Endothelial cell of umbilical vein (primary cell): ENCODE measurements at regions of chr6 and their contacts with region 1.

Region 1: DNA sequence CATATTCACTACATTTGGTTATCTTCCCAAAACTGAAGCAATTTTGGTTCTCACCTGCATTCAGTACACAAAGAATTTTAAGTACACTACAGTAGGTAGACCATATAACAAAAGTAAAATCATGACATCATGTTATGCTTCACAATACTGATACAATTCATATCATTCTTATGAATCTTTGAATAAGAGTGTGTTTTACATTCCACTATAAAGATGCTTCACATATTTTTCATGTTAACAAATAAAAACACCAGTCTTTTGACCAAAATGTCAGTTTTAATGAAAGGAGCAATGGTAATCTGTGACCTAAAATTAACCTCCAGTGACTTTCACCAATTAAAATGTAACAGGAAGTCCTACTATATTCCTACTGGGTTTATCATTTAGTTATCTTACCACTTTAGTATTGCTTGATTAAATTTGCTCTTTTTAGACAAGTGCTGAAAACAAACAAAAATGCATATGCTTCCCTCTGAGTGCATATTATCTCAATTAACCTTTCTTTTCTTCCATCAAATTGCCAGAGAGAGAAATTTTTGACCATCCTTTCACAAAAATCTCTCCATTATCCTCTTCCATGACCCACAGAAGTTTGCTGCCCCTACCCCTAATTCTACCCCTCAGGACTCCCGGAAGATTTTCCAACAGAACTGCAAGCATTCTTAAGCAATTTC is 49.3 kb downstream of the PHIP start:
- DNase-seq: no peak
- H3K4me3 ChIP-seq: no peak overlapping the region
- H3K27ac ChIP-seq: no peak overlapping the region
- H3K4me1 ChIP-seq: no peaks in the 10 kb centered on the region
- H3K27me3 ChIP-seq: no peaks in the 10 kb centered on the region
- CTCF ChIP-seq: no peak
- POLR2A ChIP-seq: no peak

Region 2: DNA sequence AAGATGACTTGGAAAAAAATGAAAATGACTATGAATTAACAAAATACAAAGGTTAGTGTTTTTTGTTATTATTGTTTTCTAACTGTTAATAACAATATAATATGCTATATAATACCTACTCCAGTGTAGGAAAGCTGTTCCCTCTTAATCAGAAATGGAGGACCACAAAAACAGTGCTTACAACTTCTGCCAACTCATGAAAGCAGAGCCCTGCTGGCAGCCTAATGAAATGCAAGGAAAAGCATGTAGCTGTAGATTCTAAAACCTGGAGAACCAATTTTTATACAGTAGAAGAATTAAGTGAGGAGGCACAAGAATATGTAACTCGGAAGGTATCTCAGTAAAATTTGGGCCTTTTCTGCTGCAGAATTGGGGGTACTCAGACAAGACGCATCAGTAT is 19.8 kb after region 1 on chr6:
- CTCF ChIA-PET with region 1: interaction called, 12 read pairs
- POLR2A ChIA-PET with region 1: no interaction called
- dilution Hi-C with region 1: no loop called
- intact Hi-C with region 1: no loop called
- DNase-seq: peak; percentile 31
- H3K4me3 ChIP-seq: no peak overlapping the region
- H3K27ac ChIP-seq: no peak overlapping the region
- H3K4me1 ChIP-seq: no peaks in the 10 kb centered on the region
- H3K27me3 ChIP-seq: no peaks in the 10 kb centered on the region
- CTCF ChIP-seq: peak; percentile 39 to 47
- POLR2A ChIP-seq: no peak